Cardiac septum (tissue), 1 donor: ENCODE measurements at regions of chr4 and their contacts with region 1.

Region 1: GRCh38 chr4:153084980-153085630 is 119.1 kb upstream of the TRIM2 start:
- DNase-seq: peak; percentile 85

Region 2: GRCh38 chr4:153127760-153128494 is 42.8 kb after region 1 on chr4:
- intact Hi-C with region 1: loop called (anchors 2 kb)
- DNase-seq: peak; percentile 92